ENCODE measurements at regions of chr22 and their contacts with region 1.

Region 1: GRCh38 chr22:20418211-20418788 is 19.3 kb downstream of the SCARF2 start:
- DNase-seq: peak; percentile 89
- ATAC-seq: peak; percentile 92 to 93
- H3K4me3 ChIP-seq: peak overlapping the region; percentile 48
- H3K27ac ChIP-seq: peak overlapping the region; percentile 39
- H3K4me1 ChIP-seq: peaks cover 9% of the 10 kb centered on the region
- H3K27me3 ChIP-seq: no peaks in the 10 kb centered on the region
- CTCF ChIP-seq: peak; percentile 92

Region 2: DNA sequence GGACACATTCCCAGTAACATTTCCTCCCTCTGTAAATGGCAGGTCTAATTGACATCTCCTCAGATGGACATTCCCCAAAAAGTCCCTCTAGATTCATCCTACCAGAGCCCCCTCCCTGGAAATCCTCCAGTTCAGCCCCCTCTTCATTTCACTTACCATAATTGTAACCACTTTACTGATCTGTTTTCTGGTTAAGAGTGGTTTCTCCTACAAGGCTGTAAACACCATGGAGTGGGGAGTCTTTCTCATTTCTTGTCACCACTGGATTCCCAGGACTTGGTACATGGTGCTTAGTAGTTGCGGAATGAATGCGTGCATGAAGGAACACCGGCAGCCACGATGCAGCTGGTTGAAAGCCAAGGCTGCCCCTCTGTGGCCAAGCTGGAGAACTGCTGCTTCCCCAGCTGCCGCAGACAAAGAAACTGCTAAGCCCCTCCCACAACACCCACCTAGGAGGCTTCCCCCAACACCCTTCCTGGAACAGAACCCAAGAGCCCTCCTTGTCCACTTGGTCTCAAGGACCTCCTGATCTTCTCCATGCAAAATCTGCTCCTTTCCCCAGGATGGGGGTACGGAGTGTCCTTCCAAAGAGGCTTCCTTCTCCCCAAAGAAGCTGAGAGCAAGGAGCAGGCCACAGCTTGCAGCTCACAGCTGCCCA is 37.9 kb after region 1 on chr22:
- intact Hi-C with region 1: loop called (anchors 5 kb)
- DNase-seq: peak; percentile 82
- ATAC-seq: peak; percentile 89 to 91
- H3K4me3 ChIP-seq: no peak overlapping the region
- H3K27ac ChIP-seq: no peak overlapping the region
- H3K4me1 ChIP-seq: peaks cover 9% of the 10 kb centered on the region
- H3K27me3 ChIP-seq: no peaks in the 10 kb centered on the region
- CTCF ChIP-seq: peak; percentile 90

Region 3: GRCh38 chr22:20514658-20515406 is 96.5 kb after region 1 on chr22:
- intact Hi-C with region 1: no loop called
- DNase-seq: no peak
- ATAC-seq: peak in 1 of 2 donors; percentile 5
- H3K4me3 ChIP-seq: no peak overlapping the region
- H3K27ac ChIP-seq: no peak overlapping the region
- H3K4me1 ChIP-seq: peaks cover 63% of the 10 kb centered on the region
- H3K27me3 ChIP-seq: no peaks in the 10 kb centered on the region
- CTCF ChIP-seq: no peak

Region 4: DNA sequence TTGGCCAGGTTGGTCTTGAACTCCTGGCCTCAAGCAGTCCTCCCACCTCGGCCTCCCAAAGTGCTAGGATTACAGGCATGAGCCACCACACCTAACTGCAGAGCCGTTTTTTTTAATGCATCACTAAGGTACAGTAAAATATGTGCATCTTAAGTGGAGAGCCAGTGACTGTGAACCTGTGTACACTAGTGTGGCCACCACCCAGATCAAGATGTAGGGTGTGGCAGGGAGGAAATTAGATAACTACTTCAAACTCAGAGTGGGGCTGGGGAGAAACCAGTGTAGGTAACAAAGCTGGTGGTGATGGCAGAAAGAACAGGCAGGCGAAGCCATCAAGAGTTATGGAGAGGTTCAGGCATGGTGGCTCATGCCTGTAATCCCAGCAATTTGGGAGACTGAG is 454.9 kb after region 1 on chr22:
- intact Hi-C with region 1: no loop called
- DNase-seq: no peak
- ATAC-seq: no peak
- H3K4me3 ChIP-seq: no peak overlapping the region
- H3K27ac ChIP-seq: no peak overlapping the region
- H3K4me1 ChIP-seq: peaks cover 3% of the 10 kb centered on the region
- H3K27me3 ChIP-seq: no peaks in the 10 kb centered on the region
- CTCF ChIP-seq: no peak